ENCODE measurements at regions of chr7 and their contacts with region 1.

Region 1: GRCh38 chr7:127253281-127254162 is 781 bp upstream of the GRM8 start:
- DNase-seq: peak; percentile 69
- H3K4me3 Mint-ChIP-seq: peak overlapping the region; percentile 70
- H3K27ac Mint-ChIP-seq: no peak overlapping the region
- H3K4me1 Mint-ChIP-seq: peaks cover 13% of the 10 kb centered on the region
- H3K27me3 Mint-ChIP-seq: peaks cover 51% of the 10 kb centered on the region

Region 2: DNA sequence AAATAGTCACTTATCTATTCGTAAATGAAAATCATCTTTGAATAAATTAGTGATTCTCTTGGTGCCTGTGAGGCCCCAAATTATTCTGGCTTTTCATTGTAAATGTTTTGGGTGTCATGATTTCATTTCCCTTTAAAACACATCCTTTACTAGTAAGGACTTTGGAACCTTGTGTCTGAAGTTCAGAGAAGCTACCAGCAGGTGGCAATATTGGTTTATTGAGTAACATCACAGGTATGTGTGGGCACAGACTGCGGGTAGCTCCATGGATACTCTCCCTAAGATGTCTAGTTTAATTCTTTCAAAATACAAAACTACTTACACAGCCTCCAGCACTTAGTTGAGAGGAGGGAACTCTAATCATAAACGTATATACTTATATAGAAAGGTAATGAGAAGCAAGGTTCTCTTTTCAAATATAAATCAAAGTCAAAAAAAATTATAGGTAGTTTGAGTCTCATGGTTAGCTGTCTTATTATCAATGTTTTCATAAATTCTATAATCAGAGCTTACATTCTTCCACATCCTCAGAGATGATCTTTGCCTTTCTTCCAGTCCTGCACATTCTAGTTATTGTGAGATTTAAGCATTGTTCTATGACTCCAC is 450.4 kb before region 1 on chr7:
- CTCF ChIA-PET with region 1: interaction called, 5 read pairs
- POLR2A ChIA-PET with region 1: no interaction called
- intact Hi-C with region 1: loop called (anchors 1 kb)
- DNase-seq: peak; percentile 33
- H3K4me3 Mint-ChIP-seq: no peak overlapping the region
- H3K27ac Mint-ChIP-seq: no peak overlapping the region
- H3K4me1 Mint-ChIP-seq: no peaks in the 10 kb centered on the region
- H3K27me3 Mint-ChIP-seq: peaks cover 3% of the 10 kb centered on the region

Region 3: GRCh38 chr7:127091620-127092019 is 161.9 kb before region 1 on chr7:
- CTCF ChIA-PET with region 1: no interaction called
- POLR2A ChIA-PET with region 1: no interaction called
- intact Hi-C with region 1: no loop called
- DNase-seq: no peak
- H3K4me3 Mint-ChIP-seq: no peak overlapping the region
- H3K27ac Mint-ChIP-seq: no peak overlapping the region
- H3K4me1 Mint-ChIP-seq: no peaks in the 10 kb centered on the region
- H3K27me3 Mint-ChIP-seq: peaks cover 1% of the 10 kb centered on the region

Region 4: GRCh38 chr7:127290801-127291361 is 37.4 kb after region 1 on chr7:
- CTCF ChIA-PET with region 1: no interaction called
- POLR2A ChIA-PET with region 1: no interaction called
- intact Hi-C with region 1: no loop called
- DNase-seq: no peak
- H3K4me3 Mint-ChIP-seq: no peak overlapping the region
- H3K27ac Mint-ChIP-seq: no peak overlapping the region
- H3K4me1 Mint-ChIP-seq: no peaks in the 10 kb centered on the region
- H3K27me3 Mint-ChIP-seq: peaks cover 7% of the 10 kb centered on the region

Region 5: GRCh38 chr7:127322351-127322750 is 68.8 kb after region 1 on chr7:
- CTCF ChIA-PET with region 1: no interaction called
- POLR2A ChIA-PET with region 1: no interaction called
- intact Hi-C with region 1: loop called (anchors 5 kb)
- DNase-seq: peak; percentile 48
- H3K4me3 Mint-ChIP-seq: no peak overlapping the region
- H3K27ac Mint-ChIP-seq: peak overlapping the region; percentile 43
- H3K4me1 Mint-ChIP-seq: peaks cover 20% of the 10 kb centered on the region
- H3K27me3 Mint-ChIP-seq: no peaks in the 10 kb centered on the region

Region 6: GRCh38 chr7:127375631-127376030 is 122.1 kb after region 1 on chr7:
- CTCF ChIA-PET with region 1: no interaction called
- POLR2A ChIA-PET with region 1: no interaction called
- intact Hi-C with region 1: no loop called
- DNase-seq: no peak
- H3K4me3 Mint-ChIP-seq: no peak overlapping the region
- H3K27ac Mint-ChIP-seq: no peak overlapping the region
- H3K4me1 Mint-ChIP-seq: peaks cover 56% of the 10 kb centered on the region
- H3K27me3 Mint-ChIP-seq: no peaks in the 10 kb centered on the region

Region 7: DNA sequence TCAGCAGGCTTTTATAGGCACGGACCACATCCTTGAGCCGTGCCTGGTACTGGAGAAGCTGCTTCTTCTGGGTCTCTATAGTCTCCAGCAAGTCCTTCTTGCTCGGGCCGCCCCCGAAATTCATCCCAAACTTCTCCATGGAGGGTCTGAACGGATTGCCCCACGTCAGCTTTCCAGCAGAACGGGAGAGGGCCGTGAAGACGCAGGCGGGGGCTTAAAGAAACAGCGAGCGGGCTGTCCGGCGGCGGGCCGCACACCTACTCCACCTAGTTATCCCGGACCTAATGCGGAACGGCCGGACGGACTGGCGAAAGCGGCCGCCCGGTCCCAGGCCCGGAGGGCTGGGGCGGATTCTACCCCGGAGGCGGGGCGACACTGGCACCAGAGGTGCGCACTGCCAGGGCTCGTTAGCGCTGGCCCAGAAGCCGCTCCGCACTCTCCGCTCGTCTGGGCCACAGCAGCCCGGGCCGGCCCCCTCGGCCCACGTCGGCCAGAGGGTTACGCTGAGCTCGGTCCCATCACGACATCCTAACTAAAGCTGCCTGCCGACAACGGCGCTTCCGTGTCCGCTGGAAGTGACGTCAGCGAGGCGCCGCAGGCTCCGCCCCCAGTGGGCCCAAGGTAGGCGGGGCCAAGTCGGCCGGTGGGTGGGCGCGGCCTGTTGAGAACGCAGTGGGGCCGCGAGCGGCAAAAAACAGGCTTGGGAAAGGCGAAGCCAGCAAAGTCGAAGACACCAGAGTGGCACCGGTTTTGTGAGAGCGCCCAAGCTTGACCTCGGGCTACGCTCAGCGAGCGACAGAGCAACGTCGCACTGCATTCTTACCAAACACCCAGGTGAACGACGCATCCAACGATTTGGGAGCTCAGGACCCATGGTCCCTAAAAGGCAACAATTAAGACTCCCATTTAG is 331.8 kb after region 1 on chr7 and contains the start of gene GCC1:
- CTCF ChIA-PET with region 1: no interaction called
- POLR2A ChIA-PET with region 1: no interaction called
- intact Hi-C with region 1: loop called (anchors 5 kb)
- DNase-seq: peak; percentile 96
- H3K4me3 Mint-ChIP-seq: peak within 1 kb of the TSS; percentile 88
- H3K27ac Mint-ChIP-seq: peak within 1 kb of the TSS; percentile 64
- H3K4me1 Mint-ChIP-seq: peaks cover 69% of the 10 kb centered on the region
- H3K27me3 Mint-ChIP-seq: no peaks in the 10 kb centered on the region
- total RNA-seq, gene GCC1: 14.1 to 15.0 TPM